ENCODE measurements at regions of chr12 and their contacts with region 1.

Region 1: DNA sequence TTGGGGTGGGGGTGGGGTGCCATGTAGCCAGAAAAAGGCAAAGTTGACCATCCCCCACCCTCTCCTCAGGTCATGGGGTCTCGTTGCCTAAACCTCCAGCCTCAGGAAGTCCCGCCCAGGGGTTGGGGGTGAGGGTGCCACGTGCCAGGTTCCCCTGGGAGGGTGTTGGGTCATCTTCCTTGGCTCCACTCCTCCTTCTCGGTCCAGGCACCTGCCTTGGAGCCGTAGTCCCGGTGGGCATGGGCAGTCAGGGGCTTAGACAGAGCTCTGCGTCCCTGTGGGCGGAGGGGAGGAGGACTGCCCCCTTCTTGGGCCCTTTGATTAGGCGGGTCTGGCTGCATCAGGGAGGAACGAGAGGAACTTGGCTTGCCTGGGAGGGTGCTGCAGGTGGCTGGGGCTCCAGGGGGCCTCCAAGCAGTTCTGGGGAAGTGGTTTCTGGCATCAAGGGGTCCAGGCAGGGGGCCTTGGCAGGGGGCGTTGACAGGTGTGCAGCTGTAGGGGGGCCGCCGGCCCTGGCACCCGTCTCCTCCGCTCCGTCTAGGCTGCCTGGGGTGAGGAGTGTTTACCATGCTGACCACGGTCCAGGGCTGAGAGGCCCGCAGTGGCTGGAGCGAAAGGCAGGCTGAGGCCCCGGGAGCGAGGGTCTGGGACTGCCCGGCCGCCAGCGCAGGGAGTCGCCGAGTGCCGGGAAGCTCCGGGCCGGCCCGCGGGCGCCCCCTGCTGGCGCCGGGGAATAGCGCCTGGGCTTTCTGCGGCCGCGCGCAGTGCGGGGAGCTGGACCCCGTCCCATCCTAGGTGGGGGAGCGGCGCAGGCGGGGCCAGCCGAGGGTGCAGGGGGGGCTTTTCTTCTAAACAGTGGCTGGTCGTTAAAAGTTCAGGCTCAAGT is 7.9 kb downstream of the SETD1B start:
- DNase-seq: peak in 8 of 9 donors; percentile 55 to 86 (median 75)
- ATAC-seq: peak; percentile 92
- H3K4me3 ChIP-seq: peak overlapping the region; percentile 74
- H3K4me3 Mint-ChIP-seq: peak overlapping the region; percentile 75 to 92 (median 84)
- H3K27ac ChIP-seq: peak overlapping the region; percentile 63
- H3K27ac Mint-ChIP-seq: peak overlapping the region; percentile 23 to 92 (median 75)
- H3K4me1 ChIP-seq: peaks cover 38 to 48% of the 10 kb centered on the region in 2 donors
- H3K4me1 Mint-ChIP-seq: peaks cover 29 to 69% (median 47%) of the 10 kb centered on the region in 7 donors
- H3K27me3 ChIP-seq: no peaks in the 10 kb centered on the region
- H3K27me3 Mint-ChIP-seq: no peaks in the 10 kb centered on the region

Region 2: GRCh38 chr12:120904197-120904773 is 907.4 kb before region 1 on chr12 and contains the start of gene SPPL3:
- CTCF ChIA-PET with region 1: no interaction called
- POLR2A ChIA-PET with region 1: no interaction called
- intact Hi-C with region 1: no loop called
- DNase-seq: peak; percentile 79 to 96 (median 87)
- ATAC-seq: peak; percentile 93
- H3K4me3 ChIP-seq: peak within 1 kb of the TSS; percentile 88
- H3K4me3 Mint-ChIP-seq: peak within 1 kb of the TSS; percentile 95 to 100 (median 99)
- H3K27ac ChIP-seq: peak within 1 kb of the TSS; percentile 90
- H3K27ac Mint-ChIP-seq: peak within 1 kb of the TSS; percentile 92 to 99 (median 95)
- H3K4me1 ChIP-seq: peaks cover 6 to 14% of the 10 kb centered on the region in 2 donors
- H3K4me1 Mint-ChIP-seq: peaks cover 25 to 42% (median 34%) of the 10 kb centered on the region in 7 donors
- H3K27me3 ChIP-seq: no peaks in the 10 kb centered on the region
- H3K27me3 Mint-ChIP-seq: no peaks in the 10 kb centered on the region
- total RNA-seq, gene SPPL3: 34.9 to 51.8 (median 48.2) TPM

Region 3: GRCh38 chr12:121697098-121697698 is 114.5 kb before region 1 on chr12:
- CTCF ChIA-PET with region 1: interaction called, 5 read pairs
- POLR2A ChIA-PET with region 1: no interaction called
- intact Hi-C with region 1: loop called in 1 of 2 experiments (anchors 1 kb)
- DNase-seq: peak in 7 of 9 donors; percentile 37 to 72 (median 63)
- ATAC-seq: no peak
- H3K4me3 ChIP-seq: no peak overlapping the region
- H3K4me3 Mint-ChIP-seq: no peak overlapping the region
- H3K27ac ChIP-seq: no peak overlapping the region
- H3K27ac Mint-ChIP-seq: peak overlapping the region in 4 of 9 donors; percentile 5 to 41 (median 28)
- H3K4me1 ChIP-seq: no peaks in the 10 kb centered on the region
- H3K4me1 Mint-ChIP-seq: peaks cover 0 to 5% (median 0%) of the 10 kb centered on the region in 7 donors
- H3K27me3 ChIP-seq: no peaks in the 10 kb centered on the region
- H3K27me3 Mint-ChIP-seq: peaks cover 0 to 7% (median 0%) of the 10 kb centered on the region in 5 donors

Region 4: DNA sequence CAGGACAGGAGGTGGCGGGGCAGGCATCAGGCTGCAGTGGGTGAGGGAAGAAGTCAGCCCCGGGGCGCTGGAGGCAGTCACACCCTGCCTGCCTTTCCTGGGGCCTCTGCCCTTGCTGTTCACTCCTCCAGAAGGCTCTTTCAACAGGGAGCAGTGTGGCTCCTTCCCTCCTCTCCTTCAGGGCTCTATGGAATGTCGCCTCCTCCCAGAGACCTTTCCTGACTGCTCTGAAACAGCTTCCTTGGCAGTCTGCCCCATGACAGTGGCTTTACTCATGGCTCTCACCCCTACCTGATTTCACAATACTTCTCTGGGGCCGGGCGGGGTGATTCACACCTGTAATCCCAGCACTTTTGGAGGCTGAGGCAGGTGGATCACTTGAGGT is 25.2 kb before region 1 on chr12:
- CTCF ChIA-PET with region 1: interaction called, 609 read pairs
- POLR2A ChIA-PET with region 1: interaction called, 1,941 read pairs
- intact Hi-C with region 1: no loop called
- DNase-seq: peak in 5 of 9 donors; percentile 41 to 63 (median 47)
- ATAC-seq: peak; percentile 15
- H3K4me3 ChIP-seq: peak overlapping the region; percentile 38
- H3K4me3 Mint-ChIP-seq: peak overlapping the region; percentile 80 to 99 (median 90)
- H3K27ac ChIP-seq: peak overlapping the region; percentile 96
- H3K27ac Mint-ChIP-seq: peak overlapping the region; percentile 95 to 100 (median 100)
- H3K4me1 ChIP-seq: peaks cover 81 to 89% of the 10 kb centered on the region in 2 donors
- H3K4me1 Mint-ChIP-seq: peaks cover 63 to 96% (median 88%) of the 10 kb centered on the region in 7 donors
- H3K27me3 ChIP-seq: no peaks in the 10 kb centered on the region
- H3K27me3 Mint-ChIP-seq: no peaks in the 10 kb centered on the region

Region 5: DNA sequence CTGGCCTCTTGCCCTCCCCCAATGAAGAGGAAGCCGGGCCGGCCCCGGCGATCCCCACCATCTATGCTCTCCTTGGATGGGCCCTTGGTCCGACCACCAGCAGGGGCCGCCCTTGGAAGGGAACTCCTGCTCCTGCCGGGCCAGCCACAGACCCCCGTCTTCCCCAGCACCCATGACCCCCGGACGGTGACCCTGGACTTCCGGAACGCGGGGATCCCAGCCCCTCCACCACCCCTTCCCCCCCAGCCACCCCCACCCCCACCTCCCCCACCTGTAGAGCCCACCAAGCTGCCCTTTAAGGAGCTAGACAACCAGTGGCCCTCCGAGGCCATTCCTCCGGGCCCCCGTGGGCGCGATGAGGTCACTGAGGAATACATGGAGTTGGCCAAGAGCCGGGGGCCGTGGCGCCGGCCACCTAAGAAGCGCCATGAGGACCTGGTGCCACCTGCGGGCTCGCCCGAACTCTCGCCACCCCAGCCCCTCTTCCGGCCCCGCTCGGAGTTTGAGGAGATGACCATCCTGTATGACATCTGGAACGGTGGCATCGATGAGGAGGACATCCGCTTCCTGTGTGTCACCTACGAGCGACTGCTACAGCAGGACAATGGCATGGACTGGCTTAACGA is 11.5 kb after region 1 on chr12:
- CTCF ChIA-PET with region 1: interaction called, 3 read pairs
- POLR2A ChIA-PET with region 1: interaction called, 10 read pairs
- intact Hi-C with region 1: no loop called
- DNase-seq: peak in 1 of 9 donors; percentile 10
- ATAC-seq: no peak
- H3K4me3 ChIP-seq: no peak overlapping the region
- H3K4me3 Mint-ChIP-seq: peak overlapping the region in 1 of 10 donors; percentile 23
- H3K27ac ChIP-seq: no peak overlapping the region
- H3K27ac Mint-ChIP-seq: peak overlapping the region in 1 of 9 donors; percentile 58
- H3K4me1 ChIP-seq: no peaks in the 10 kb centered on the region
- H3K4me1 Mint-ChIP-seq: peaks cover 0 to 9% (median 1%) of the 10 kb centered on the region in 7 donors
- H3K27me3 ChIP-seq: no peaks in the 10 kb centered on the region
- H3K27me3 Mint-ChIP-seq: no peaks in the 10 kb centered on the region